B cell (primary cell): ENCODE measurements at regions of chr11 and their contacts with region 1.

Region 1: GRCh38 chr11:100575870-100576705 is 111.0 kb upstream of the ARHGAP42 start:
- DNase-seq: peak; percentile 73
- ATAC-seq: peak; percentile 51
- H3K4me3 ChIP-seq: no peak overlapping the region
- H3K4me3 Mint-ChIP-seq: no peak overlapping the region
- H3K27ac ChIP-seq: no peak overlapping the region
- H3K27ac Mint-ChIP-seq: no peak overlapping the region
- H3K4me1 ChIP-seq: peaks cover 0 to under 1% of the 10 kb centered on the region in 2 donors
- H3K4me1 Mint-ChIP-seq: peaks cover 2% of the 10 kb centered on the region
- H3K27me3 ChIP-seq: peaks cover 0 to 3% (median 0%) of the 10 kb centered on the region in 4 experiments
- H3K27me3 Mint-ChIP-seq: peaks cover 9% of the 10 kb centered on the region
- CTCF ChIP-seq: peak; percentile 96

Region 2: GRCh38 chr11:100681064-100681502 is 105.0 kb after region 1 on chr11:
- CTCF ChIA-PET with region 1: interaction called, 27 read pairs
- POLR2A ChIA-PET with region 1: no interaction called
- intact Hi-C with region 1: loop called (anchors 1 kb)
- DNase-seq: peak; percentile 81
- ATAC-seq: peak; percentile 97
- H3K4me3 ChIP-seq: peak overlapping the region in 1 of 5 experiments; percentile 16
- H3K4me3 Mint-ChIP-seq: peak overlapping the region; percentile 61
- H3K27ac ChIP-seq: peak overlapping the region; percentile 77 to 80
- H3K27ac Mint-ChIP-seq: peak overlapping the region; percentile 87
- H3K4me1 ChIP-seq: peaks cover 42 to 49% of the 10 kb centered on the region in 2 donors
- H3K4me1 Mint-ChIP-seq: peaks cover 47% of the 10 kb centered on the region
- H3K27me3 ChIP-seq: no peaks in the 10 kb centered on the region
- H3K27me3 Mint-ChIP-seq: no peaks in the 10 kb centered on the region
- CTCF ChIP-seq: no peak

Region 3: DNA sequence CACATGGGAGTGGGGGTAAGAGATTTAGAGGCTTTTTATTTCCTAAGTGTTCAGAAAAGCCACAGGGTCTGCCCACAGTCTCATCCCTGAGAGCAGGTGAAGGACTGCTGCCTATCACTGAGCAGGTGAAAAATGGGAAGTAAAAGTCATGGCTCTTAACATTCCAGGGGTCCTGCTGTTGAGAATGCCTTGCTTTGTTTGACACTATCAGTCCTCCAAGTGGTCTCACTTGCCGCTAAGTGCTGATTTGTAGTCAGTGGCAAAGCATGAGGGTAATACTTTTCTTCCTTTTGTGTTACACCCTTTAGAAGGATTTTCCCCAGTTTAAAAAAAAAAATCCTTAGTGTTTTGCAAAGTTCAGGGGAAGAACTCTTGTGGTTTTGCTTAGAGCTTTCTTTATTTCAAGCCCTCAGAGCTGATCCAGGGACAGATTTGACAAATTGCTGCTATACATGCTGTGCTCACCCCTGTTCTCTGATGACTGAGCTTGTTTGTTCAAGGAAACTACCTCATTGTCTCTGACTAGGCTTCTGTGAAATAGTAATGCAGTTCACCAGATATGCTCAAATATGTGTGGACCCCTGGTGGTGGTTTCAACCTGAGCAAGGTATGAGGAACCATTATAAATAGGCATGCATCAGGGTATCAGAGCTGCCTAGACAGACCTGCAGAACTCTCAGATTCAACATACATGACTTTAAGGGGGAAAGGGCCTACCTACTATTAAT is 252.0 kb after region 1 on chr11:
- CTCF ChIA-PET with region 1: interaction called, 19 read pairs
- POLR2A ChIA-PET with region 1: no interaction called
- intact Hi-C with region 1: loop called (anchors 1 kb)
- DNase-seq: peak; percentile 56
- ATAC-seq: peak; percentile 62
- H3K4me3 ChIP-seq: no peak overlapping the region
- H3K4me3 Mint-ChIP-seq: no peak overlapping the region
- H3K27ac ChIP-seq: no peak overlapping the region
- H3K27ac Mint-ChIP-seq: no peak overlapping the region
- H3K4me1 ChIP-seq: peaks cover 0 to 4% of the 10 kb centered on the region in 2 donors
- H3K4me1 Mint-ChIP-seq: peaks cover 4% of the 10 kb centered on the region
- H3K27me3 ChIP-seq: no peaks in the 10 kb centered on the region
- H3K27me3 Mint-ChIP-seq: no peaks in the 10 kb centered on the region
- CTCF ChIP-seq: no peak

Region 4: DNA sequence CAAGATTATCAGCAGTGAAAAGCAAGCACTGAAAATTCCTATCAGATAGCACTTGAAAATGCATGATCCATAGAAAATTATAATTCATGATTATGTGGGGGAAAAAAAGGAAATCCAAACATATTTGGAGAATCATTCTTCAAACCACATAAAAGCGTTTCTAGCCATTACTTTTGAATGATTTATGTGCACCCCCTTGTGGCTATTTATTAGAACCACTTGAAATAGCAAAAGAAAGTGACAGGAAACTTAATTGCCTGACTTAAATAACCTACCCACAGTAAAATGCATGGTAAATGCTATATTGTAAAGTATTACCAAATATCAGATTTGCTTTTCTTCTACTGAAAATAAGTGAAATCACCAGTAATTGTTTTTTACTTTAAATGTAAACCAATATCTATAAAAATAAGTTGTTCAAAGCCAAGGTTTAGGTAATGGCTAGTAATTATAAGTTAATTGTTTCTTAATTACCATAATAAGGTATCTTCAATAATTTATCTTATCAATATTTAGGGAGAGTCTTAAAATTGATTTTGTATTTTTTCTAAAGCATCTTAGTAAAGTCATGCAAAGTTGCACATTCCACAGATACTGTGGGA is 279.5 kb after region 1 on chr11:
- CTCF ChIA-PET with region 1: interaction called, 68 read pairs
- POLR2A ChIA-PET with region 1: no interaction called
- intact Hi-C with region 1: loop called (anchors 1 kb)
- DNase-seq: peak; percentile 59
- ATAC-seq: no peak
- H3K4me3 ChIP-seq: no peak overlapping the region
- H3K4me3 Mint-ChIP-seq: no peak overlapping the region
- H3K27ac ChIP-seq: no peak overlapping the region
- H3K27ac Mint-ChIP-seq: no peak overlapping the region
- H3K4me1 ChIP-seq: no peaks in the 10 kb centered on the region
- H3K4me1 Mint-ChIP-seq: no peaks in the 10 kb centered on the region
- H3K27me3 ChIP-seq: no peaks in the 10 kb centered on the region
- H3K27me3 Mint-ChIP-seq: no peaks in the 10 kb centered on the region
- CTCF ChIP-seq: peak; percentile 79

Region 5: DNA sequence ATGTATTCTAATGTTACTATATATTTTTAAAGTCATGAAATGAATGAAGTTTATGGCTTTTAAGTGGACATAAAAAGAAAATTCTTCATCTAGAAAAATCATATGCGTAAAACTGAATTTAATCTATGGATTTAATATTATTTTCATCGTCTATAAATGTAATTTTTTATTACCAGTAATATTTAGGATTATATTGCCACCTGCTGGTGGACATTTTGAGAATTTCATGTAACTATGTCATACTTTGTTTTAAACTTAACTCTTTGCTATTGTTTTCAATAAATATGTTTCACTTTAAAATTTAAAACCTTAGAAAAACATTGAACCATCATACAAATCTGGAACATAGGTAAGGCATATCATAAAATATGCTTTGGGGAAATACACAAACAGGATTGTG is 1272.2 kb after region 1 on chr11:
- CTCF ChIA-PET with region 1: interaction called, 4 read pairs
- POLR2A ChIA-PET with region 1: no interaction called
- intact Hi-C with region 1: loop called (anchors 10 kb)
- DNase-seq: peak; percentile 11
- ATAC-seq: no peak
- H3K4me3 ChIP-seq: no peak overlapping the region
- H3K4me3 Mint-ChIP-seq: no peak overlapping the region
- H3K27ac ChIP-seq: no peak overlapping the region
- H3K27ac Mint-ChIP-seq: no peak overlapping the region
- H3K4me1 ChIP-seq: no peaks in the 10 kb centered on the region
- H3K4me1 Mint-ChIP-seq: no peaks in the 10 kb centered on the region
- H3K27me3 ChIP-seq: peaks cover 0 to 4% (median 0%) of the 10 kb centered on the region in 4 experiments
- H3K27me3 Mint-ChIP-seq: peaks cover 8% of the 10 kb centered on the region
- CTCF ChIP-seq: peak; percentile 28